ENCODE measurements at regions of chr2 and their contacts with region 1.

Region 1: DNA sequence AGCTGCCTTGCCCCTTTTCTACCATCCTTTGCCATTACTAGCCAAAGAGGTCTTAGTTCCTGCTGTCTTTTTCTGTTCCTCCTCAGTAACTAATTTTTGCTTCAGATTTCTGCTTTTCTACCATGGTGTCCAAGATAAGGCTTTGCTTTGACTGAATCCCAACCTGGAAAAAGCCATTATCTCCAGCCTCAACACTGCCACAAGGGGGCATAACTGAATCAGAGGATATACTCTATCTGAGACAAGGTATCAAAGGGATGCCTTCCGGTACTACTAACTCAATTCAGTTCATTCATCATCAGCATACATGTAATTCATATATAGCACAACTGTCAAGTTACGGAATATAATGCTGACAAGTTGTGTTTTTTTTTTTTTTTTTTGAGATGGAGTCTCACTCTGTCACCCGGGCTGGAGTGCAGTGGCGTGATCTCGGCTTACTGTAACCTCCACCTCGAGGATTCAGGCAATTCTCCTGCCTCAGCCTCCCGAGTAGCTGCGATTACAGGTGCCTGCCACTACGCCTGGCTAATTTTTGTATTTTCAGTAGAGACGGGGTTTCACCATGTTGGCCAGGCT is 11.4 kb downstream of the OSGEPL1 start:
- DNase-seq: peak in 8 of 9 experiments; percentile 4 to 66 (median 34)
- ATAC-seq: peak; percentile 84
- H3K4me3 ChIP-seq: no peak overlapping the region
- H3K4me3 Mint-ChIP-seq: no peak overlapping the region
- H3K27ac ChIP-seq: no peak overlapping the region
- H3K27ac Mint-ChIP-seq: no peak overlapping the region
- H3K4me1 ChIP-seq: no peaks in the 10 kb centered on the region
- H3K4me1 Mint-ChIP-seq: peaks cover 4% of the 10 kb centered on the region
- H3K27me3 ChIP-seq: no peaks in the 10 kb centered on the region
- H3K27me3 Mint-ChIP-seq: no peaks in the 10 kb centered on the region
- CTCF ChIP-seq: peak; percentile 64

Region 2: GRCh38 chr2:189791338-189792042 is 40.3 kb after region 1 on chr2:
- CTCF ChIA-PET with region 1: interaction called, 4 read pairs
- POLR2A ChIA-PET with region 1: no interaction called
- intact Hi-C with region 1: loop called (anchors 5 kb)
- DNase-seq: peak in 2 of 9 experiments; percentile 64 to 77
- ATAC-seq: peak; percentile 63
- H3K4me3 ChIP-seq: peak overlapping the region in 1 of 2 experiments; percentile 45
- H3K4me3 Mint-ChIP-seq: peak overlapping the region; percentile 77
- H3K27ac ChIP-seq: peak overlapping the region; percentile 51 to 74
- H3K27ac Mint-ChIP-seq: peak overlapping the region; percentile 84
- H3K4me1 ChIP-seq: peaks cover under 1% of the 10 kb centered on the region
- H3K4me1 Mint-ChIP-seq: peaks cover 26% of the 10 kb centered on the region
- H3K27me3 ChIP-seq: no peaks in the 10 kb centered on the region
- H3K27me3 Mint-ChIP-seq: no peaks in the 10 kb centered on the region
- CTCF ChIP-seq: no peak

Region 3: DNA sequence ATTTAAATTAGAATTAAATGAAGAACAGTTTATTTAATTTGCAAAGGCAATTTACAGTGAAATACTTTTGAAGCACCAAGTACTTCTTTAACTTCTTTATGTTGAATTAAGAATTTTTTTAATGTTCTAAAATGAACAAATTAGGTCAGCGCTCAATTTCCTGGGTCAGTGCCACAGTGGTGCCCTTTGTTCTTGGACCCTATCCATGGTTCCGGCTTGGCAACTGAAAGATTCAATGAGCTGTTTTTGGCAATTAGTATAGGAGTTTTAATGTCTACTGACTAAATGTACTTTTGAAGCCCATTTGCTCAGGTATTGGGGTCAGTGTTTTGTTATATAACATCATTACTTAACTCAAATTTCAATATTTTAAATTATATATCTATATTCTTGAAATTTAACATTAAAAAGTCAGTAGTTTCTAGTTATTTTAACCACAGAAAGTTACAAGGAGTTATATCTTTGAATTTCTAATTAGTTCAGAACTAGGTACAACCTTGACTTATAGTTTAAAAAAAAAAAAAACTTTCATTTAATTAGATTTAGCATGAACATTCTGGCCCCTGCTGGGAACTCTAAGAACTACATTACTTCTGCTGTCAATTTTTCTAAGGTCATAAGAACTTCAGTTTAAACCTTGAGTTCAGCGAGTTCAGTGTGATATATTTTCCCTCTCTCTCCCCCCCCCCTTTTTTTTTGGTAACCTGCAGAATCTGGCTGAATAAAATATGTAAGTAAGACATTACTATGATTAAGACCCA is 318.9 kb after region 1 on chr2:
- CTCF ChIA-PET with region 1: no interaction called
- POLR2A ChIA-PET with region 1: no interaction called
- intact Hi-C with region 1: loop called in 1 of 2 experiments (anchors 5 kb)
- DNase-seq: peak in 3 of 9 experiments; percentile 14 to 61 (median 56)
- ATAC-seq: peak; percentile 75
- H3K4me3 ChIP-seq: no peak overlapping the region
- H3K4me3 Mint-ChIP-seq: no peak overlapping the region
- H3K27ac ChIP-seq: no peak overlapping the region
- H3K27ac Mint-ChIP-seq: no peak overlapping the region
- H3K4me1 ChIP-seq: no peaks in the 10 kb centered on the region
- H3K4me1 Mint-ChIP-seq: no peaks in the 10 kb centered on the region
- H3K27me3 ChIP-seq: no peaks in the 10 kb centered on the region
- H3K27me3 Mint-ChIP-seq: peaks cover 2% of the 10 kb centered on the region
- CTCF ChIP-seq: peak; percentile 53

Measured in CD8-positive, alpha-beta T cell (primary cell).